Body of pancreas (tissue), 4 donors: ENCODE measurements at regions of chr2 and their contacts with region 1.

Region 1: DNA sequence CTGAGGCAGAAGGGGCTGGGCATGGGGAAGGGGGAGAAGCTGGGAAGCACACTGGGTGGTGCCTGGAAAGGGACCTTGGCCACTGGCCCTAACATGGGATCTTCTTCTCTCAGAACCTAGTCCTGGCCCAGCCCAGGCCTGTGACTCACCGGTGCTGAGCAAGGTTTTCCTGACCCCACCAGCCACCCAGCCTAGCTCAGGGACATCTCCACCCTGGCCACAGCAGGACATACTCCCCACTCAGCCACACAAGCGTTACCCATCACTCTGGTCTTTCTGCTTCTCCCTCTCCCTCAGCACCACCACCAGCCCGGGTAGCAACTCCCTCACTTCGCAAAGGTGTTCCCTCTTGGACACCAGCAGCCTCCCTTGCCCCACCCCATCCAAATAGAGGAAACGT is 22.8 kb downstream of the TNS1 start:
- DNase-seq: peak in 1 of 4 donors; percentile 12
- ATAC-seq: no peak
- H3K4me3 ChIP-seq: no peak overlapping the region
- H3K27ac ChIP-seq: peak overlapping the region in 1 of 4 donors; percentile 26
- H3K4me1 ChIP-seq: peaks cover 34% of the 10 kb centered on the region
- H3K27me3 ChIP-seq: no peaks in the 10 kb centered on the region
- CTCF ChIP-seq: no peak
- POLR2A ChIP-seq: no peak

Region 2: DNA sequence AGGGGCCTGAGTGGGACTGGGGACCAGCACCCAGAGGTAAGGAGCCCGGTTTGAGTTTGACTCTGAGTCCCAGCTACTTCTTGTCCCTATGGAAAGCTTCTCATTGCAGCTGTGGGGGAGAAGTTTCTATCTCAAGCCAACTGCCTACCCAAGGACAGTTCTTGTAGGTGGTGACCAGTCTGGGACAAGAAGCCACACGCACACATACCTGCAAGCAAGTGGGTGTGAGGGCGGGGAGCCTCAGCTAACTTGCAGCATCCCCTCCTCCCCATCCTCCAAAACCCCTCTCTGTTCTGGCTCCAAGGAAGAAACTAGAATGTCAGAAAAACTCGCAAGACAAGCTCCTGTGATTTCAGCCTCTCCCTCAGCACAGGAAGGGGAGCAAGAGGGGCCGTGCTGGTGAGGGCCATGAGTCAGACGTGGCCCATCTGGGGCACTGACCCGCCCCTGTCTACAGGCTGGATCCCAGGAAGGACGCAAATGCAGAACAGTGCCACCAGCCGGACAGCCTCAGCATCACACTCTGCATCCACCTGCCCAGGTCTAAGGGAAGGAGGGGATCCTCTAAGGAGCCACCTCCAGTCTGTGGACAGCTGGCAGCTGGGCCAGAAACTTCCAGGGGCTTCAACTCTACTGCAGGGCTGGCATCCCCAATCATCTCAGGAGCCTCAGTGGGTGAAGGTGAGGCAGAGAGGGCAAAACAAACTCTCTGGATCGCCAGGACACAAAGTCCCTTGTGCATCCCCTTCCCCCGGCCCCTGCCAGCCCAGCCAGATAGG is 80.6 kb before region 1 on chr2:
- intact Hi-C with region 1: loop called (anchors 5 kb)
- DNase-seq: peak; percentile 78 to 85 (median 80)
- ATAC-seq: peak; percentile 24
- H3K4me3 ChIP-seq: no peak overlapping the region
- H3K27ac ChIP-seq: peak overlapping the region; percentile 81 to 92 (median 90)
- H3K4me1 ChIP-seq: peaks cover 76% of the 10 kb centered on the region
- H3K27me3 ChIP-seq: no peaks in the 10 kb centered on the region
- CTCF ChIP-seq: peak; percentile 37 to 70 (median 58)
- POLR2A ChIP-seq: no peak

Region 3: GRCh38 chr2:217947383-217948350 is 32.4 kb before region 1 on chr2:
- intact Hi-C with region 1: loop called (anchors 5 kb)
- DNase-seq: peak in 1 of 4 donors; percentile 15
- ATAC-seq: no peak
- H3K4me3 ChIP-seq: no peak overlapping the region
- H3K27ac ChIP-seq: no peak overlapping the region
- H3K4me1 ChIP-seq: peaks cover 66% of the 10 kb centered on the region
- H3K27me3 ChIP-seq: no peaks in the 10 kb centered on the region
- CTCF ChIP-seq: peak in 1 of 7 experiments; percentile 22
- POLR2A ChIP-seq: no peak

Region 4: GRCh38 chr2:218418717-218419458 is 438.9 kb after region 1 on chr2 and contains the start of gene VIL1:
- intact Hi-C with region 1: no loop called
- DNase-seq: peak; percentile 83 to 92 (median 87)
- ATAC-seq: peak; percentile 94
- H3K4me3 ChIP-seq: no peak within 1 kb of the TSS
- H3K27ac ChIP-seq: peak within 1 kb of the TSS in 3 of 4 donors; percentile 53 to 79 (median 64)
- H3K4me1 ChIP-seq: peaks cover 39% of the 10 kb centered on the region
- H3K27me3 ChIP-seq: no peaks in the 10 kb centered on the region
- CTCF ChIP-seq: no peak
- POLR2A ChIP-seq: peak in 2 of 3 donors; percentile 50 to 51
- total RNA-seq, gene VIL1: 15.3 to 15.8 TPM